A673 (cell line): ENCODE measurements at regions of chr4 and their contacts with region 1.

Region 1: DNA sequence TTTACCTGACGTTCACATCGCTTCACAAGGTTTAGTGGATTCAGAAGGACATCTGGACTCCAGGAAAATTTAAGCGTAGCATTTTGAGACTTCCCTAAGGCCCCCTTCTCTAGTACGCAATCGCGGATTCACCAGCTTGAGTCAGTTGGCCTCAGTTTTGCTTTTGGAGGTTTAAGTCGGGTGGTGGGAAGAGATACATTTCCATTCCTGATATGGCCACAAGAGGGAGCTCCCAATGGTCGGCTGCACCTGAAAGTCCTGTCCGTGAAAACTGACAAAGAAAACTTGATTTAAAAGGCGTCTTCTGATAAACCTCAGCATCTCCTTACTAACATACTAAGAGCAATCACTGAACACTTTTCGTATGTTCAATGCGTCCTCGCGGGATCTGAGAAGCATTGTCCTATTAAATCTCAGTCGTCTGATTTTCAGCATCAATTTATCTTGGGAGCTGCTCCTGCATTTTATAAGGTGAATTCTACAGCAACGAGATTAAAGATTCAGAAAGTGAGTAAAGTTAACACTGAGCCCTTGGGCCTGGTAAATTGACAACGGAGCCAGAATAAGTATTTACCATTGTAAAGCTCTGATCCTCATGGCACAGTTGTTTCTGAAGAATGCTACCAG is 50.6 kb downstream of the LGI2 start:
- DNase-seq: peak; percentile 81
- H3K4me3 ChIP-seq: no peak overlapping the region
- H3K27ac ChIP-seq: no peak overlapping the region
- H3K4me1 ChIP-seq: peaks cover 4% of the 10 kb centered on the region
- H3K27me3 ChIP-seq: no peaks in the 10 kb centered on the region
- CTCF ChIP-seq: peak; percentile 92

Region 2: GRCh38 chr4:24488399-24489164 is 491.6 kb before region 1 on chr4:
- CTCF ChIA-PET with region 1: no interaction called
- POLR2A ChIA-PET with region 1: no interaction called
- intact Hi-C with region 1: loop called (anchors 2 kb)
- DNase-seq: peak; percentile 70
- H3K4me3 ChIP-seq: no peak overlapping the region
- H3K27ac ChIP-seq: no peak overlapping the region
- H3K4me1 ChIP-seq: no peaks in the 10 kb centered on the region
- H3K27me3 ChIP-seq: no peaks in the 10 kb centered on the region
- CTCF ChIP-seq: peak; percentile 93

Region 3: DNA sequence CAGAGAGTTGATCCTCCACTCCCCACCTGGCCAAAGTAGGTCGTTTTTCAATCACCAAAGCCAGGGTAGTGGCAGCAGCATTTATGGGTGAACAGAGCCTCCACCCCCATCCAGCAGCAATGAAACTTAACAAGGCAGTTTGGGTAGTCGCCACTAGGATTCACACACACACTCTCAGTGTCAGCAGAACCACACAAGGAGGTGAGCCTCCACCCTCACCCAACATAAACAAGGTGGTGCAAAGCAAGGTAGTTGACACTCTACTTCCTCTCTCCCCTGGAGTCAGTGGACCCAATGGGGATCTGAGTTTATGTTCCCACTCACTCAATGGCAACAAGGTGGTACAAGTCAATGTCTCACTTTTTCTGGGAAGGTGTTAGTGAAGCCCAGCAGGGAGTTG is 16.9 kb before region 1 on chr4:
- CTCF ChIA-PET with region 1: interaction called, 11 read pairs
- POLR2A ChIA-PET with region 1: no interaction called
- intact Hi-C with region 1: no loop called
- DNase-seq: no peak
- H3K4me3 ChIP-seq: no peak overlapping the region
- H3K27ac ChIP-seq: no peak overlapping the region
- H3K4me1 ChIP-seq: no peaks in the 10 kb centered on the region
- H3K27me3 ChIP-seq: no peaks in the 10 kb centered on the region
- CTCF ChIP-seq: no peak

Region 4: DNA sequence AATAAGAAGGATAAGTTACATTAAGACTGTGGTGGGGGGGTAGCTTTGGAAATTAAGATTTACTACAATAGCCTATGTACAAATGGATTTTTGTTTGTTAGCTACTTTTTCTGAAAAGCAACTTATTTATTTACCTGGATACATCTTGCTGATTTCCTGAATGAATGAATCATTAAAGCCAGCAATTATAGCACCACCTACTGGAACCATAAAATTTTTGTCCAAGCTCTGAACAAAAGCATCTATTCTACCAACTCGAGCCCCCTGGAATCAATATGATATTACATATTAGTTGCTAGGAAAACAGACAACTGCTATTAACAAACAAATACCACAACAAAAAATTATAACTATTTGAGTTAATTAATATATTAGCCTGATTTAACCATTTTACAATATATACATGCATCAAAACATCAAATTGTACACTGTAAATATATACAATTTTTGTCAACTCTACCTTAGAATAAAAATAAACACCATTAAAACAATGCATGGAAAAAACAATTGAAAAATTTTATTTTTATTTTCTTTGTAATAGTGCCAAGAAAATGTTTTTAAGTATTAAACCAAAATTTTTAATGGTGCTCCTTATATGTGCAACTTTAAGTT is 164.8 kb after region 1 on chr4:
- CTCF ChIA-PET with region 1: interaction called, 7 read pairs
- POLR2A ChIA-PET with region 1: no interaction called
- intact Hi-C with region 1: loop called (anchors 5 kb)
- DNase-seq: peak; percentile 45
- H3K4me3 ChIP-seq: no peak overlapping the region
- H3K27ac ChIP-seq: no peak overlapping the region
- H3K4me1 ChIP-seq: no peaks in the 10 kb centered on the region
- H3K27me3 ChIP-seq: no peaks in the 10 kb centered on the region
- CTCF ChIP-seq: peak; percentile 77

Region 5: GRCh38 chr4:25367004-25367621 is 386.9 kb after region 1 on chr4:
- CTCF ChIA-PET with region 1: no interaction called
- POLR2A ChIA-PET with region 1: no interaction called
- intact Hi-C with region 1: loop called (anchors 5 kb)
- DNase-seq: peak; percentile 57
- H3K4me3 ChIP-seq: no peak overlapping the region
- H3K27ac ChIP-seq: no peak overlapping the region
- H3K4me1 ChIP-seq: no peaks in the 10 kb centered on the region
- H3K27me3 ChIP-seq: no peaks in the 10 kb centered on the region
- CTCF ChIP-seq: peak; percentile 75